ENCODE measurements at regions of chr10 and their contacts with region 1.

Region 1: GRCh38 chr10:35236739-35237138 is 99.6 kb upstream of the CCNY start:
- DNase-seq: no peak
- ATAC-seq: no peak

Region 2: DNA sequence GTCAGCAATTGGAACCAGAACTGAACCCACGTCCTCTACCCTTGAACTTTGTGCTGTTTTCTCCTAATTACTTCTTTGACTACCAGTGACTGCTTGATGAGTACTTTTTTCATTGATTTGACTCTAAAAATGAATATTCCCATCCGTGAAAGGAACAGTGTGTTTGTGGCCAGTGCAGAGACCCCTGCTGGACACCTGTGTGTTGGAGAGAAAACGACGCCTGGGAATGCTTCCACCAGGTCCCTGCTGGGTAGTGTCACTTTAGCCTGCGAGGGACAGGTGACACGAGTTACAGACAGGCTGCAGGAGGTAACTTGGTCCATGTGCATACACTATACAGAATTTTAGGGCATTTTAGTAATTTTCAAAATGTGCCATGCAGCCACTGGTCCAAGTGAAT is 361.6 kb after region 1 on chr10:
- intact Hi-C with region 1: loop called (anchors 10 kb)
- DNase-seq: no peak
- ATAC-seq: peak in 1 of 2 donors; percentile 50

Region 3: GRCh38 chr10:35607475-35608327 is 371.0 kb after region 1 on chr10:
- intact Hi-C with region 1: loop called in 1 of 2 experiments (anchors 10 kb)
- DNase-seq: peak; percentile 33
- ATAC-seq: peak; percentile 27 to 60